Astrocyte of the cerebellum (primary cell): ENCODE measurements at regions of chr20 and their contacts with region 1.

Region 1: GRCh38 chr20:32902456-32903420 is 44.0 kb downstream of the EFCAB8 start:
- DNase-seq: peak; percentile 22
- H3K4me3 ChIP-seq: no peak overlapping the region
- CTCF ChIP-seq: peak; percentile 87

Region 2: GRCh38 chr20:32796981-32797451 is 105.7 kb before region 1 on chr20:
- in situ Hi-C with region 1: loop called (anchors 5 kb)
- DNase-seq: no peak
- H3K4me3 ChIP-seq: no peak overlapping the region
- CTCF ChIP-seq: no peak

Region 3: GRCh38 chr20:32858701-32859372 is 43.9 kb before region 1 on chr20 and contains the start of gene EFCAB8:
- in situ Hi-C with region 1: no loop called
- DNase-seq: no peak
- H3K4me3 ChIP-seq: no peak within 1 kb of the TSS
- CTCF ChIP-seq: no peak

Region 4: GRCh38 chr20:33076662-33077372 is 174.1 kb after region 1 on chr20:
- in situ Hi-C with region 1: loop called (anchors 5 kb)
- DNase-seq: no peak
- H3K4me3 ChIP-seq: no peak overlapping the region
- CTCF ChIP-seq: peak; percentile 16